Activated naive CD4-positive, alpha-beta T cell treated with anti-CD3 and anti-CD28 coated beads, Interleukin-2, amount 10 ng/mL, durations not matched to agents 7 days and 5 days (primary cell): ENCODE measurements at regions of chr21 and their contacts with region 1.

Region 1: DNA sequence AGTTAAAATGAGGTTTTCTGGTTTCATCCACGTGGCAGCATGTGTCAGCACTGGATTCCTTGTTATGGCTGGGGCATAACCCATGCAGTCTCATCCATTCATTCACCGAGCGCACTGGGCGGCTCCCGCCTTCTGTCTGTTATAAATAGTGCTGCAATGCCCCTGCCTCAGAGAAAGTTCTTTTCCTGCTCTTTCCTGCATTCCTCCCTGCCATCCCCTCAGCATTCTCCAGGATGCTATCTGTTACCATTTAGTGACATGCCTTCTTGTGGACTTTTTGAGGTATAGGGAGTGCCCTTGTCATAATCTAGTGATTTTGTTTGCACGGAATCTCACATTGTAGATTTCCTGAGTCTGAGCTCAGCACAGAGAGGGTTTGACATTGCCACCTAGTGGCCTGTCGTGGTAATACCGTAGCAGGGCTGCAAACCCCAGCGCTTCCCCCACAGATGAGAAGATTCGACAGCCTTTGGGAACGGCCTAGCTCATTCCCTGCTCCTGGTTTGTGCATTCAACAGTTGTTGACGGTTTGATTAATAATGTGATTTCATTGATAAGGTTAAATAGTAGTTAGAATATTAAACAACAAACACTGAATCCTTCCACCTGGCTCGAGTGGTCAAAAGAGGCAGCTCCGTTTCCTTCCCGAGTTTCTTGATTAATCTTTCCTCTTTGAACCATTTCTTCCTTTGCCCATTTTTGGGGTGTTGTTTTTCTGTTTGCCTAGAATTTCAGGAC is 46.3 kb downstream of the UMODL1 start:
- DNase-seq: peak; percentile 84
- H3K4me3 Mint-ChIP-seq: no peak overlapping the region
- H3K27ac Mint-ChIP-seq: no peak overlapping the region
- H3K4me1 Mint-ChIP-seq: peaks cover 37% of the 10 kb centered on the region
- H3K27me3 Mint-ChIP-seq: peaks cover 89% of the 10 kb centered on the region

Region 2: GRCh38 chr21:41612674-41613532 is 504.5 kb before region 1 on chr21:
- CTCF ChIA-PET with region 1: interaction called, 12 read pairs
- DNase-seq: peak; percentile 44
- H3K4me3 Mint-ChIP-seq: no peak overlapping the region
- H3K27ac Mint-ChIP-seq: no peak overlapping the region
- H3K4me1 Mint-ChIP-seq: no peaks in the 10 kb centered on the region
- H3K27me3 Mint-ChIP-seq: peaks cover 48% of the 10 kb centered on the region

Region 3: GRCh38 chr21:41879190-41879998 is 238.0 kb before region 1 on chr21 and contains the start of gene PRDM15:
- CTCF ChIA-PET with region 1: interaction called, 11 read pairs
- DNase-seq: peak; percentile 88
- H3K4me3 Mint-ChIP-seq: peak within 1 kb of the TSS; percentile 85
- H3K27ac Mint-ChIP-seq: peak within 1 kb of the TSS; percentile 94
- H3K4me1 Mint-ChIP-seq: peaks cover 26% of the 10 kb centered on the region
- H3K27me3 Mint-ChIP-seq: peaks cover 10% of the 10 kb centered on the region

Region 4: GRCh38 chr21:41918561-41919358 is 198.6 kb before region 1 on chr21:
- CTCF ChIA-PET with region 1: no interaction called
- DNase-seq: no peak
- H3K4me3 Mint-ChIP-seq: no peak overlapping the region
- H3K27ac Mint-ChIP-seq: no peak overlapping the region
- H3K4me1 Mint-ChIP-seq: peaks cover 13% of the 10 kb centered on the region
- H3K27me3 Mint-ChIP-seq: no peaks in the 10 kb centered on the region